ENCODE measurements at regions of chr7 and their contacts with region 1.

Region 1: GRCh38 chr7:98014352-98014751 is 24.4 kb upstream of the OCM2 start:
- DNase-seq: peak; percentile 12
- ATAC-seq: peak; percentile 45; the same call in 1 of the 2 replicates
- H3K4me3 ChIP-seq: no peak overlapping the region
- H3K27ac ChIP-seq: no peak overlapping the region
- H3K4me1 ChIP-seq: no peaks in the 10 kb centered on the region
- H3K27me3 ChIP-seq: no peaks in the 10 kb centered on the region
- CTCF ChIP-seq: 0 out of 2 replicates have a peak, but pooled peaks have one; percentile 14

Region 2: DNA sequence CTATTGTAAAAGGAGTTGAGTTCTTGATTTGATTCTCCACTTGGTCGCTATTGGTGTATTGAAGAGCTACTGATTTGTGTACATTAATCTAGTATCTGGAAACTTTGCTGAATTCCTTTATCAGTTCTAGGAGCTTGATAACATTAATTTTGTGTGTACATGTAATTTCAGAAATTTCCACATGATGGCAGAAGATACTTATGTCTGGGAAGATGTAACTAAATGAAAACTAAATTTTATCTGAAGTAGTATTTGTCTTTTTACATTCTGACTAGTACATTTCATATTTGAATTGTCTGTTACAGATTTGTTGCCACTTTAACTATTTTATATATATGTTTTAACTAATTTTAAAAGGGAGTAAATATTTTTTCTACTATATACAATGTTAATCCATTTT is 869.3 kb before region 1 on chr7:
- CTCF ChIA-PET with region 1: interaction called, 3 read pairs
- POLR2A ChIA-PET with region 1: no interaction called
- intact Hi-C with region 1: loop called (anchors 2 kb)
- DNase-seq: peak; percentile 61
- ATAC-seq: no peak
- H3K4me3 ChIP-seq: no peak overlapping the region
- H3K27ac ChIP-seq: no peak overlapping the region
- H3K4me1 ChIP-seq: no peaks in the 10 kb centered on the region
- H3K27me3 ChIP-seq: no peaks in the 10 kb centered on the region
- CTCF ChIP-seq: peak; percentile 58

Region 3: DNA sequence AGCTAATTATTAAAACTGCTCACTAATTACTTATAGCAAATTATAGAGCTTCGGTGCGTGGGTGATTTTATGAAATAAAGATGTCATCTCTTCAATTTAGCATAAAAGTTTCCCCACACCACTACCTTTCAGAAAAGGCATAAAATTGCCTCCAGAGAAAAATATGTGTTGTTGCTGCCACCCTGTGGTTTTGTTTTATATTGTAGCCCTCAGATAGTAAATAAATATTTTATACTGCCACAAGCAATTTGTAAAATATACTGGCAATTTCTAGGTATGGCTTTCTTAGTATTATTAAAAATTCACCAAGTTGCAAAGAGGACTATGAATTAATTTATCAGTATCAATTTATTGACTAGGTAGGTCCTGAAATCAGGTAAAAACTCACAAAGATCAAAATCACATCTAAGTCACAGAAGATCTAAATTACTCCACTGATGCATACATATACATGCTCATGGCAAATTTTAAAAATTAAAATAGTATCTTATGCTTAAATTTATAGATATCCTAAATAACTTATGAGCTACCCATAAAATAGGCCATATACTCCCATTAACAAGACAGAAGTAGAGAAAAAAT is 168.6 kb before region 1 on chr7:
- CTCF ChIA-PET with region 1: interaction called, 4 read pairs
- POLR2A ChIA-PET with region 1: no interaction called
- intact Hi-C with region 1: loop called (anchors 1 kb)
- DNase-seq: peak; percentile 58
- ATAC-seq: peak; percentile 44; the same call in 1 of the 2 replicates
- H3K4me3 ChIP-seq: no peak overlapping the region
- H3K27ac ChIP-seq: no peak overlapping the region
- H3K4me1 ChIP-seq: no peaks in the 10 kb centered on the region
- H3K27me3 ChIP-seq: no peaks in the 10 kb centered on the region
- CTCF ChIP-seq: peak; percentile 64

Region 4: DNA sequence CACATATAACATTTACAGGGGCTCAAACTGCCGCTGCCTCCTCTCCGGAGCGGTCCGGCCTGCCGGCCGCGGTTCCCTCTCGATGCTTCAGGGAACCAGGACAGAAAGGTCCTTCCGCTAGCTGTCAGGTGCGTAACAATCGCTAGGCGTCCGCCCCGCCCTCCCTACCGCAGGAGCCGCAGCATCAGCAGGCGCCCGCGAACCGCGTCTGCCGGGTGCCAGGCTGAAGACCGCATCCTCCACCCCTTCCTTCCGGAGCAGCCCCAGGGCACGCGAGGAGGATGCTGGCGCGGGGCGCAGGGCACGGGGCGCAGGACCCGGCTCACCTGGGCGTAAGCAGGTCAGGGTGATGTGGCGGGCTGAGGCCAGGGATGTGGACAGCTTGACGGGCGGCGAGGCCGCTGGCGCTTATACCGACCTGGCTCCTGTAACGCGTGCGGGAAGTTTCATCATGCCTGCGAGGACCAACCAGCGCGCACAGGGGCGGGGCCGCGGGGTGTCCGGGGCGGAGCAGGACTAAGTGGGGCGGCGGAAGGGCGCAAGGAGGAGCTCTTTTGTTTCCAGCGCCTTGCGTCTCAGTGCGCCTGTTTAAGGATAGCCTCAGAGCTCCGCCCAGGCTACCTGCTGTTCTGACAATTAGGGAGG is 142.2 kb before region 1 on chr7 and contains the start of gene ASNS:
- CTCF ChIA-PET with region 1: interaction called, 3 read pairs
- POLR2A ChIA-PET with region 1: no interaction called
- intact Hi-C with region 1: loop called (anchors 1 kb)
- DNase-seq: peak; percentile 91
- ATAC-seq: peak; percentile 97
- H3K4me3 ChIP-seq: peak within 1 kb of the TSS; percentile 80
- H3K27ac ChIP-seq: no peak within 1 kb of the TSS
- H3K4me1 ChIP-seq: peaks cover 10% of the 10 kb centered on the region
- H3K27me3 ChIP-seq: no peaks in the 10 kb centered on the region
- CTCF ChIP-seq: no peak
- total RNA-seq, gene ASNS: 14.9 and 19.5 TPM in 2 replicates